Activated CD8-positive, alpha-beta memory T cell treated with anti-CD3 and anti-CD28 coated beads, Interleukin-2, amount 10 ng/mL, durations not matched to agents 7 days and 5 days (primary cell): ENCODE measurements at regions of chr17 and their contacts with region 1.

Region 1: GRCh38 chr17:47949136-47949759 is 7.9 kb downstream of the PNPO start:
- DNase-seq: peak; percentile 90
- ATAC-seq: peak; percentile 80
- H3K4me3 Mint-ChIP-seq: peak overlapping the region; percentile 55
- H3K27ac Mint-ChIP-seq: peak overlapping the region; percentile 78
- H3K4me1 Mint-ChIP-seq: peaks cover 40% of the 10 kb centered on the region
- H3K27me3 Mint-ChIP-seq: no peaks in the 10 kb centered on the region

Region 2: DNA sequence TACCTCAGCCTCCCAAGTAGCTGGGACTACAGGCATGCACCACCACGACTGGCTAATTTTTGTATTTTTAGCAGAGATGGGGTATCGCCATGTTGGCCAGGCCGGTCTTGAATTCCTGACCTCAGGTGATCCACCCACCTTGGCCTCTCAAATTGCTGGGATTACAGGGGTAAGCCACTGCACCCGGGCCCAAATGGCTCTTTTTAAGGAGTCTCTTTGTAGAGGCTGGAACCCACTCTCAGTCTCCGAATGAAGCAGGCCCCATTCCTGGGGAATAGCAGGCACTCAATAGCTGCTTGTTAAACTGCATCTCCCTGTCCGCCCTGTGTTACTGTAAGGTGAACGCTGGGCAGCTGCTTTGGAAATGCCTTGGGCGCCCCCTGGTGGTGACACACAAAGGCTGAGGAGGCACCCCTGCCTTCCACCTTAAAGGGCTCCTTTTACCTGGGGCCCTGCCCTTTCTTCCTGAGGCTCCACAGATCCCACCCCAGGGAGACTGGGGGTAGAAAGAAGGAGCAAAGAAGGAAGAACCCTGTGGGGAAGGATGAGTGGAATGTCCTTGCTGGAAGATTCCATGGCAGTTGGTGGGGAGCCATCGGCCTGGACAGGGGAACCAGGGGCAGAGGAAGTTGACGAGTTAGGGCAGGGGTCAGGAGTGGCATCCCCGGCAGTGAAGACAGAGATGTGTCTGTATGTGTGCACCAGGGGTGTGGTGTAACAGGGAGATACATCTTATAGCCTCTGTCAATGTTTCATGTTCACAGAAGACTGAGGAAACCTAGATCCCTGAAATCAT is 59.3 kb before region 1 on chr17:
- CTCF ChIA-PET with region 1: interaction called, 21 read pairs
- DNase-seq: peak; percentile 93
- ATAC-seq: peak; percentile 99
- H3K4me3 Mint-ChIP-seq: no peak overlapping the region
- H3K27ac Mint-ChIP-seq: no peak overlapping the region
- H3K4me1 Mint-ChIP-seq: peaks cover 22% of the 10 kb centered on the region
- H3K27me3 Mint-ChIP-seq: no peaks in the 10 kb centered on the region

Region 3: GRCh38 chr17:47895856-47896671 is 53.2 kb before region 1 on chr17 and contains the start of gene SP2:
- CTCF ChIA-PET with region 1: interaction called, 21 read pairs
- DNase-seq: peak; percentile 100
- ATAC-seq: peak; percentile 93
- H3K4me3 Mint-ChIP-seq: peak within 1 kb of the TSS; percentile 83
- H3K27ac Mint-ChIP-seq: peak within 1 kb of the TSS; percentile 95
- H3K4me1 Mint-ChIP-seq: peaks cover 47% of the 10 kb centered on the region
- H3K27me3 Mint-ChIP-seq: no peaks in the 10 kb centered on the region
- total RNA-seq, gene SP2: 21.7 to 22.9 TPM

Region 4: GRCh38 chr17:47929218-47930000 is 19.8 kb before region 1 on chr17:
- CTCF ChIA-PET with region 1: interaction called, 11 read pairs
- DNase-seq: no peak
- ATAC-seq: no peak
- H3K4me3 Mint-ChIP-seq: no peak overlapping the region
- H3K27ac Mint-ChIP-seq: no peak overlapping the region
- H3K4me1 Mint-ChIP-seq: peaks cover 18% of the 10 kb centered on the region
- H3K27me3 Mint-ChIP-seq: no peaks in the 10 kb centered on the region